Right ventricle myocardium inferior (tissue), 1 donor: ENCODE measurements at regions of chr1 and their contacts with region 1.

Region 1: GRCh38 chr1:193183019-193183627 is 3.3 kb downstream of the B3GALT2 start:
- DNase-seq: no peak
- ATAC-seq: no peak

Region 2: DNA sequence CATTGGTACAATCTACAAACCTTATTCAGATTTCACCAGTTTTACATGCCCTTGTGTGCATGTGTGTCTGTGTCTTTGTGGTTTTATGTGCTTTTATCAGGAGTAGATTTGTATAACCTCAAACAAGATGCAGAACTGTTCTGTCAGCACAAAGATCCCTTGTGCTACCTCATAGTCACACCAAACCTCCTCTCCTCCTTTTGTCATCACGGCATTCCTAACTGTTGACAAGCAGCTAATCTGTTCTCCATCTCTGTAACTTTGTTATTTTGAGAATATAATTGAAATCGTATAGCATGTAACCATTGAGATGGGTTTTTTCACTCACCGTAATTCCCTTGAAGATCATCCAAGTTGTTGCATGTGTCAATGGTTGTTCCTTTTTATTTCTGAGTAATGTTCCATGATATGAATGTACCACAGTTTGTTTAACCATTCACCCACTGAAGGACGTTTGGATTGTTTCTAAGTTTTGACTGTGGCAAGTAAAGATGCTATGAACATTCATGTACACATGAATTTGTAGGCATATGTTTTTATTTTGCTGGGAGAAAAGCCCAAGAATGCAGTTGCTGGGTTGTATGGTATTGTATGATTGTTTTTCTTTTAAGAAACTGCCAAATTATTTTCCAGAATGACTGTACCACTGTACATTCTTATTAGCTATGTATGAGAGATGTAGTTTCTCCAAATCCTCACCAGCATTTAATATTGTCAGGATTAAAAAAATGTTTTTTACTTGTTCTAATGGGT is 81.4 kb after region 1 on chr1:
- intact Hi-C with region 1: loop called (anchors 5 kb)
- DNase-seq: no peak
- ATAC-seq: no peak

Region 3: GRCh38 chr1:193589597-193590040 is 406.5 kb after region 1 on chr1:
- intact Hi-C with region 1: loop called (anchors 5 kb)
- DNase-seq: no peak
- ATAC-seq: peak; percentile 73

Region 4: DNA sequence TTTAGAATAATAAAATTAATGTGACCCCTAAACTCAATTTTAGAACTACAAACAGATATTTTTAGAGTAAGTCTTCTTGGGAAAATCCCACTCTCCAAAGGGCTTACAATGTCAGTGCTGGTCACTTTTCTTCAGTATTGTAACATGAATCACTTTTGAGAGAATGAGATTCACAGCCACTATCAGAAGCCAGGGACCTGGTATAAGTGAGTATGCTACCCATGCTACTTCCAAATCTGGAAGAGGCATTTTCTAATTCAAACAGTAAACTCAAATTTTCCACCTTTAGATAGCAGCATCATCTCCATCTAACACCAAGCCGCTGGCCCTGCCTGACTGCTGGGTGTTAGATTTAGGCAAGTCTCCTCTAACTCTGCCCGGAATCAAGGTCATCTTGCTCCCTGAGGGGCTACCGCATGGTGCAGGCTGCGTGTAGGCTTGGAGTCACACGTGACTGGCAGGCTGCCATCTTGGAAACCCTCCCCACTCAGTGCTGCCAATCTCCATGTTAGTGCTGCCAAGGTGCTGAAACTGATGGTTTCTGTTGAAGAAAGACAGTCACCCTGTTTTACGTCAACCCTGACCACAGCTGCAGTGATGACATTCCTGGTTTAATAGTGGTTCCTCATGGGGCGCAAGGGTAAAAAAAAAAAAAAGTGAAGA is 886.2 kb after region 1 on chr1:
- intact Hi-C with region 1: loop called (anchors 2 kb)
- DNase-seq: peak; percentile 74
- ATAC-seq: peak; percentile 91

Region 5: DNA sequence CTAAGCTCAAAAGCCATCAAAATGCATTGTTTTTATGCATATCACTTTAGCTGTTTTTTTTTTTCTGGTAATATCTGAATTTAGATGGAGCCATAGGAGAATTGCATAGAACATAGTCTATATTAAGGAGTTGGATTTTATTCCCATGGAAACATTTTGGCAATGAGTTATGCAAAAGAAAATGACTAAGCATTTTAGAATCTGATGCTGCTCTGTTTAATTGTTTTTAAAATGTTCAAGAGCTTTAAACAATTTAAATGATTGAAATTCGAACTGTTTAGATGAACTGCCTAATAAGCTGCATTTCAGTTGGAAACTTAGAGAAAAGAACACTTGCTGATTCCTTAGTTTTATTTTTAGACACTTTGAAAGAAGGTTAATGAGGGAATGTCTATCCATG is 1534.8 kb after region 1 on chr1:
- intact Hi-C with region 1: loop called (anchors 10 kb)
- DNase-seq: no peak
- ATAC-seq: no peak